Caco-2 (cell line): ENCODE measurements at regions of chr12 and their contacts with region 1.

Region 1: DNA sequence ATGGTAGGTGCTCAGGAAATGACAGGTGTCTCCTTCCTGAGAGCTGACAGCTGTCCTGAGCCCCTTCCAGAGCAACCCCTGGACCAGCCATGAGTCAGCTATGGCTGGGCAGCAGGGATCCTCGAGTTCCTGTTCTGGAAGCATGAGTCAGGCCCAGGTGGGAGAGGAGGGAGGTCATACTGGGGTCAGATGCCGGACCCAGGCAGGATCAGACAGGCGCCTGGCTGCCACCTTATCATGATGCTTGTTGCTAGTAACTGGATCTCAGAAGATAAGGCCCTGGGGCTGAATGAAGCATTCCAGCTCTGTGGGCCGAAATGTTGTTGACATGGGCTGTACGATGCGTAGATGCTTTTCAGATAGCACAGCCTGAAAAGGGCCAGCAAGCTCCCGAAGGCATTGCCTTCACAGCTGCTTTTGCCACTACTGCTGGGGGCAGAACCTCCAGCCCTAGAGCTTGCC is 17.4 kb upstream of the KRT7 start:
- DNase-seq: peak; percentile 85 to 94
- H3K4me3 ChIP-seq: no peak overlapping the region
- H3K4me3 Mint-ChIP-seq: no peak overlapping the region
- H3K27ac Mint-ChIP-seq: peak overlapping the region; percentile 79
- H3K4me1 ChIP-seq: peaks cover 48% of the 10 kb centered on the region
- H3K4me1 Mint-ChIP-seq: peaks cover 45% of the 10 kb centered on the region
- H3K27me3 ChIP-seq: no peaks in the 10 kb centered on the region
- H3K27me3 Mint-ChIP-seq: no peaks in the 10 kb centered on the region
- CTCF ChIP-seq: no peak

Region 2: GRCh38 chr12:52256165-52256876 is 40.7 kb after region 1 on chr12:
- CTCF ChIA-PET with region 1: no interaction called
- POLR2A ChIA-PET with region 1: no interaction called
- intact Hi-C with region 1: no loop called
- DNase-seq: no peak
- H3K4me3 ChIP-seq: no peak overlapping the region
- H3K4me3 Mint-ChIP-seq: no peak overlapping the region
- H3K27ac Mint-ChIP-seq: peak overlapping the region; percentile 7
- H3K4me1 ChIP-seq: no peaks in the 10 kb centered on the region
- H3K4me1 Mint-ChIP-seq: peaks cover 2% of the 10 kb centered on the region
- H3K27me3 ChIP-seq: no peaks in the 10 kb centered on the region
- H3K27me3 Mint-ChIP-seq: no peaks in the 10 kb centered on the region
- CTCF ChIP-seq: no peak

Region 3: DNA sequence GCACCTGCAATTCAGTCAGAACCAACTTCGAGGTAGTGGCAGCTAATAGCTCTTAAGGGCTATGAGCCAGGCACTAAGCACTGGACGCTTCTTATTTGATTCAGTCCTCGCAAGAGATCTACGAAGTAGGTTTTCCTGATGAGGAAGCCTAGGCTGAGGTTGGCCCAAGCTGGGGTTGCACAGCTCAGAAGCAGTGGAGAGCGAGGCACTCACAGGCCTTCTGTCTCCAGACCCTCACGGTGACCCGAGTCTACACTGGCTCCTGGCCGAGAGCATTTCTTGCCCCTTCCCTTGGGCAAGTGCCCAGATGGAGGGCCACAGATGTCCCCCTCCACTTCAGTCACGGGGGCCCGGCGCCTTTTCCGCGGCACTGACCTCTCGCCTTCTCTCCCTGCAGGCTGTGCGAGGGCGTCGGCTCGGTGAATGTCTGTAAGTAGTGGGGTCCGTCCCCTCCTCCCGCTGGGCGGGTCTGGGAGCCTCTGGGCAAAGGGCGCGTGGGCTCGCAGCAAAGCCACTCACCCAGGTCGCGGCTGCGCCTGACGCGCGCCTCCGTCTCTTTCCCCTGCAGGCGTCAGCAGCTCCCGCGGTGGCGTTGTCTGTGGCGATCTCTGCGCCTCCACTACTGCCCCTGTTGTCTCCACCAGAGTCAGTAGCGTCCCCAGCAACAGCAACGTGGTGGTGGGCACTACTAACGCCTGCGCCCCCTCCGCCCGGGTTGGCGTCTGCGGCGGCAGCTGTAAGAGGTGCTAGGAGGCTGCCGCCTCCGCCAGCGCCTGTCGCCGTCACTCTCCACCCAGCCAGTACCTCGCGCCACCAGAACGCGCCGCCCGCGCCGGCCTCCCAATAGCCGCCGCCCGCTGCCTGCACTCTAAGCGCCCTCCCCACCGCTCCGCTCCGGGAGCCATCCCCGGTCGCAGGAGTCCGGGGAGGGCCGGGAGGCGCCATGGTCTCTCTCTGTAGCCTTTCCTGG is 92.5 kb after region 1 on chr12:
- CTCF ChIA-PET with region 1: no interaction called
- POLR2A ChIA-PET with region 1: interaction called, 5 read pairs
- intact Hi-C with region 1: loop called (anchors 5 kb)
- DNase-seq: peak; percentile 77 to 86
- H3K4me3 ChIP-seq: peak overlapping the region; percentile 51
- H3K4me3 Mint-ChIP-seq: peak overlapping the region; percentile 67
- H3K27ac Mint-ChIP-seq: peak overlapping the region; percentile 2
- H3K4me1 ChIP-seq: peaks cover 6% of the 10 kb centered on the region; the same call in 1 of the 2 replicates
- H3K4me1 Mint-ChIP-seq: peaks cover 7% of the 10 kb centered on the region
- H3K27me3 ChIP-seq: no peaks in the 10 kb centered on the region
- H3K27me3 Mint-ChIP-seq: peaks cover 2% of the 10 kb centered on the region
- CTCF ChIP-seq: peak; percentile 10 to 15